Activated T-helper 2 cell treated with anti-CD3 and anti-CD28 coated beads, Interferon-gamma antibody, Interleukin-2, Interleukin-4, amounts not matched to agents 10 μg/mL and 5 μg/mL and 100 μg/mL, durations not matched to agents 14 hours and 24 hours and 36 hours (primary cell): ENCODE measurements at regions of chr13 and their contacts with region 1.

Region 1: GRCh38 chr13:28658796-28659620 is at the start of gene POMP:
- DNase-seq: peak; percentile 87
- H3K4me3 Mint-ChIP-seq: peak within 1 kb of the TSS; percentile 96
- H3K27ac Mint-ChIP-seq: peak within 1 kb of the TSS; percentile 95
- H3K4me1 Mint-ChIP-seq: peaks cover 49% of the 10 kb centered on the region
- H3K27me3 Mint-ChIP-seq: no peaks in the 10 kb centered on the region
- total RNA-seq, gene POMP: 145 and 149 TPM in 2 replicates

Region 2: DNA sequence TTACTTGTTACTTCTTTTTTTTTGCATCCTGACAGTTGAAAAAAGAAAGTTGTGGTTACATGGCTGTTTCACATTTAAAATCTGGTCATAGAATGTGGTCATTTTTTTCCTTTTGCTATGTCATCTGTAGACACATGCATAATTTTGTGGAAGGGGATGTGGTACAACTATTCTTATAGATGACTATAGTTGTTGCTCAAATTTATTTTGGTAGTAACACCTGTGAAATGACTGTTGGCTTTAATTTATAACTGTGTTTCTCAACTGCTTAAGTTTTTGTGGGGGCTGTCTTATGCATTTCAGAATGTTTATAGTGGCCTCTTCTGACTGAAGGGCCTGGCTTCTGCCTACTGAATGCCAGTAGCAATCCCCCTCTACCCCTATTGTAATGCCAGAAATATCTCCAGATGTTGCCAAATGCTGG is 390.2 kb before region 1 on chr13:
- intact Hi-C with region 1: loop called (anchors 5 kb)
- DNase-seq: no peak
- H3K4me3 Mint-ChIP-seq: no peak overlapping the region
- H3K27ac Mint-ChIP-seq: no peak overlapping the region
- H3K4me1 Mint-ChIP-seq: peaks cover 23% of the 10 kb centered on the region
- H3K27me3 Mint-ChIP-seq: no peaks in the 10 kb centered on the region

Region 3: GRCh38 chr13:28494776-28495537 is 164.1 kb before region 1 on chr13 and contains the start of gene FLT1:
- intact Hi-C with region 1: loop called (anchors 2 kb)
- DNase-seq: peak; percentile 32
- H3K4me3 Mint-ChIP-seq: peak within 1 kb of the TSS; percentile 75
- H3K27ac Mint-ChIP-seq: no peak within 1 kb of the TSS
- H3K4me1 Mint-ChIP-seq: peaks cover 19% of the 10 kb centered on the region
- H3K27me3 Mint-ChIP-seq: peaks cover 53% of the 10 kb centered on the region
- total RNA-seq, gene FLT1: 29.9 and 32.4 TPM in 2 replicates

Region 4: GRCh38 chr13:28611654-28612131 is 47.3 kb before region 1 on chr13:
- intact Hi-C with region 1: loop called (anchors 1 kb)
- DNase-seq: peak; percentile 25
- H3K4me3 Mint-ChIP-seq: peak overlapping the region; percentile 56
- H3K27ac Mint-ChIP-seq: peak overlapping the region; percentile 92
- H3K4me1 Mint-ChIP-seq: peaks cover 43% of the 10 kb centered on the region
- H3K27me3 Mint-ChIP-seq: peaks cover 4% of the 10 kb centered on the region

Region 5: GRCh38 chr13:28707629-28708427 is 48.8 kb after region 1 on chr13:
- intact Hi-C with region 1: no loop called
- DNase-seq: no peak
- H3K4me3 Mint-ChIP-seq: no peak overlapping the region
- H3K27ac Mint-ChIP-seq: peak overlapping the region; percentile 15
- H3K4me1 Mint-ChIP-seq: peaks cover 10% of the 10 kb centered on the region
- H3K27me3 Mint-ChIP-seq: no peaks in the 10 kb centered on the region

Region 6: GRCh38 chr13:28718543-28719226 is 59.7 kb after region 1 on chr13 and contains the start of gene SLC46A3:
- intact Hi-C with region 1: loop called (anchors 2 kb)
- DNase-seq: peak; percentile 95
- H3K4me3 Mint-ChIP-seq: peak within 1 kb of the TSS; percentile 92
- H3K27ac Mint-ChIP-seq: peak within 1 kb of the TSS; percentile 60
- H3K4me1 Mint-ChIP-seq: peaks cover 26% of the 10 kb centered on the region
- H3K27me3 Mint-ChIP-seq: peaks cover 4% of the 10 kb centered on the region
- total RNA-seq, gene SLC46A3: 2.8 and 3.1 TPM in 2 replicates

Region 7: DNA sequence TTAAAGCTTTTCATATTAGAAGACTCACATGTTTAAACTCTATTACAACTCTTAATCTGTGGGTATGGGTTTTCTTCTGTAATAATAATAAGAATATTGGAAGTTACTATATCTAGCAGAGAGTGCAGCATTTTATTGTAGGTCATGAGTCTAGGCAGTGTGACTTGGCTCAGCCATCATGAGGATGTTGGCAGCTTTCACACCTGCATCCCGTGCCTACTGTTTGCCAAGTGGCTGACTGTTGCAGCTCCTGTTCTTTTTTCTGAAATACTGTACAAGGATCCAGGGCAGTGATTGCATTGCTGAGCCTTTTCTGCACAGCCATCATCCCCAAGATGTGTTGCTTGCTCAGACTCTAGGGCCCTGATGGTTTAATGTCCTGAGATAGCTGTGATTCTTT is 208.6 kb after region 1 on chr13:
- intact Hi-C with region 1: no loop called
- DNase-seq: no peak
- H3K4me3 Mint-ChIP-seq: no peak overlapping the region
- H3K27ac Mint-ChIP-seq: no peak overlapping the region
- H3K4me1 Mint-ChIP-seq: no peaks in the 10 kb centered on the region
- H3K27me3 Mint-ChIP-seq: no peaks in the 10 kb centered on the region